ENCODE measurements at regions of chr1 and their contacts with region 1.

Region 1: DNA sequence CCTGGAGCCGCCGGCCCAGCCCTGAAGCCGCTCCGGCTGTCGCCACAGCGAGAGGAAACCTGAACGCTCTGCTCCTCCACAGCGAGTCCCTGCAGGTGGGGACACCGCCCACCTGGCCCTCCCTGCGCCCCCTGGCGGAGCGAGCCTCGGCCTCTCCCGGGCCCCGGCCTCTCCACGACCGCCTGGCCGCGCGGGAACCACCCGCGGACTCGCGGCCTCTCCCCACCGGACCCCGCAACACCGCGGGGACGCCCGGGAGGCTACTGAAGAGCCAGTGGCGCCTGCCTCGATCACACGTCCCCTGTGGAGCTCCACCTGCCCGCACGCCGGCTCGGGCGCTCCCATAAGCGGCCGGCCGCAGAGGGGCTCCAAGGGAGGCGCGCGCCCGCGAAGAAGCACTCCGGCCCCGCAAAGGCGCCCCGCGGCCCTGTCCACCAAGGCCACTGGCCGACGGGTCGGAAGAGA is 109.6 kb downstream of the KCNN3 start:
- DNase-seq: peak; percentile 72
- H3K4me3 Mint-ChIP-seq: peak overlapping the region; percentile 74
- H3K27ac Mint-ChIP-seq: peak overlapping the region; percentile 95
- H3K4me1 Mint-ChIP-seq: peaks cover 47% of the 10 kb centered on the region
- H3K27me3 Mint-ChIP-seq: peaks cover 16% of the 10 kb centered on the region

Region 2: DNA sequence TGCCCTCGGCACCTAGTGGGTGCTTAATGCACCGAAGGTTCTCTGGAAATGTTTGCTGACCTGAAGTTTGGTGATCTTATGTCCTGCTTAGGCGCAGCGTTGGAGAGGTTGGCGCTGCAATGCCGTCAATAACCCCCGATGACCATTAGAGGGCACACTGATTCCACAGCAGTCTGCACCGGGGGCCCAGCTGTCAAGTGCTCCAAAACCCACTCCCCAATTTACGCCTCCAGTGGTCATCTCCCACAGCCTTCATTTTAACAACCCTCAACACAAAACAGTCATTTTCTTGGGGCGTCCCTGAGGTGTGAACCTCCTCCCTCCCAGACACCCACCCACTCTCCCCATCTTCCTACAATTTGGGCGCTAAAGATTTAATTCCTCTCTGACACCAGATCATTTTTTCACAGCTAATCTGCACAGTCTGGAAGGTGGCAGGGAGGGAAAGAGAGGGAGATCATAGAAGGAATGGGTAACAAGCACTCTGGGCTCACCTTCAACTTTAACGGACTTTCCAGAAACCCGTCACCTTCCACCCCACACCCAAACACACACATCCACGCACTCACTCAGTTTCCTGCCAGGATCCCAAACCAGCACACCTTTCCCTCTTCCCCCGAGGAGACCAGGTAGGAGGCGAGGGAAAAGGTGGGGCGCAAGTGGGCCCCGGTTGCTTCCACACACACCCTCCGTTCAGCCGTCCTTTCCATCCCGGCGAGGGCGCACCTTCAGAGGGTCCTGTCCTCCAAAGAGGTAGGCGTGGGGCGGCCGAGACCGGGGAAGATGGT is 1082.6 kb before region 1 on chr1:
- intact Hi-C with region 1: no loop called
- DNase-seq: peak; percentile 31
- H3K4me3 Mint-ChIP-seq: peak overlapping the region; percentile 71
- H3K27ac Mint-ChIP-seq: no peak overlapping the region
- H3K4me1 Mint-ChIP-seq: peaks cover 20% of the 10 kb centered on the region
- H3K27me3 Mint-ChIP-seq: peaks cover 42% of the 10 kb centered on the region

Region 3: DNA sequence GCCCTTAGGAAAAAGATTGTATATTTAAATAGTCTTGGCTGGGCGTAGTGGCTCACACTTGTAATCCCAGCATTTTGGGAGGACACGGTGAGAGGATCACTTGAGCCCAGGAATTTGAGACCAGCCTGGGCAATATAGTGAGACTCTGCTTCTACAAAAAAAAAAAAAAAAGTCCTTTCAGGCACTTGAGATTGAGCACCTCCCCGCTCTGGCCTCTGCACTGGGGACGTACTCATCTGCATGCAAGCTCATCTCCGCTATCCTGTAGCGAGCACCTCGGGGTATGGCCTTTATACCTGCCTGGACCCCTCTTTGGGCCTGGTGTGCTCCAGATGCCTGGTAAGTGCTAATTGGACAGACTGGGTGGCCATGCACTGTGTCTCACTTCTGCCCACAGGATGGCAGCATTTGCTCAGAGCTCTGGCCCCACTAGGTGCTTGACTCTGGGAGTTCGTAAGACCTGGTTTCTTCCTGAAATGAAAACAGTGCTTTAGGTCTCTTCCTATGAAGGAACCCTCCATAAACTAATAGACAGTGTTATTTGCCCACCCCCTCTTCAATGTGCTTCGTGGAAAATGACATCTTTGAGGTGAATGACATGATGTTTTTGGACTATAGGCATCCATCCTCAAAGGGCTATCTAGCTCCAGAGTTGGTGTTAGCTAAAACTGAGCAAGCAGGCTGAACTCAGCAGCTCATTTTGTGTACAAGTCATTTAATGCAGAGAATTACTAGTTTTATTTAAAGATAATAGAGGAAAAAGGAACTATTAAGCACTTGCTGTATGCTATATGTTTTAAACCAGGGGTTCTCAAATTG is 90.8 kb before region 1 on chr1:
- intact Hi-C with region 1: loop called (anchors 1 kb)
- DNase-seq: peak; percentile 63
- H3K4me3 Mint-ChIP-seq: no peak overlapping the region
- H3K27ac Mint-ChIP-seq: no peak overlapping the region
- H3K4me1 Mint-ChIP-seq: peaks cover 9% of the 10 kb centered on the region
- H3K27me3 Mint-ChIP-seq: peaks cover 2% of the 10 kb centered on the region

Region 4: DNA sequence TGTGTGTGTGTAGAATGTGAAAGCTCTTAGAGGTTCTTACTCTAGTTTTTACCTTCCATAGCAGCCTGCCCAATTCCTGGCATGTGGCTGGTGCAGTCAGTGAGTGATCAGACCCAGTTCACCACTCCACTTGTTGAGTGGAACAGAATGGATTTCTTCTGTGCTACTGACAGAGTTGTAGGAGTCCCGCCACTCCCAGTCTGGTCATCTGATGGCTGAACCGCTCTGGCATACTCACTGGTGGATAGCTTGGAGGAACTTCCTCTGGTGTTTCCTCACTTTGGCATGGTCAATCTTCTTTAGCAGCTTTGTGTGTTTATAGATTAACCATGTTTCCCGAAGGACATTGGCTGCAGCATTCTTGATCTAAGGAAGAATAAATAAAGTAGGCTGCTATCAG is 45.9 kb before region 1 on chr1:
- intact Hi-C with region 1: loop called (anchors 5 kb)
- DNase-seq: no peak
- H3K4me3 Mint-ChIP-seq: no peak overlapping the region
- H3K27ac Mint-ChIP-seq: no peak overlapping the region
- H3K4me1 Mint-ChIP-seq: peaks cover 14% of the 10 kb centered on the region
- H3K27me3 Mint-ChIP-seq: peaks cover 3% of the 10 kb centered on the region

Region 5: GRCh38 chr1:154736841-154737240 is 23.7 kb before region 1 on chr1:
- intact Hi-C with region 1: loop called (anchors 1 kb)
- DNase-seq: no peak
- H3K4me3 Mint-ChIP-seq: no peak overlapping the region
- H3K27ac Mint-ChIP-seq: peak overlapping the region; percentile 93
- H3K4me1 Mint-ChIP-seq: peaks cover 58% of the 10 kb centered on the region
- H3K27me3 Mint-ChIP-seq: no peaks in the 10 kb centered on the region

Region 6: GRCh38 chr1:154878371-154879022 is 118.0 kb after region 1 on chr1:
- intact Hi-C with region 1: loop called (anchors 5 kb)
- DNase-seq: peak; percentile 63
- H3K4me3 Mint-ChIP-seq: no peak overlapping the region
- H3K27ac Mint-ChIP-seq: no peak overlapping the region
- H3K4me1 Mint-ChIP-seq: peaks cover 9% of the 10 kb centered on the region
- H3K27me3 Mint-ChIP-seq: no peaks in the 10 kb centered on the region